ENCODE measurements at regions of chr16 and their contacts with region 1.

Region 1: DNA sequence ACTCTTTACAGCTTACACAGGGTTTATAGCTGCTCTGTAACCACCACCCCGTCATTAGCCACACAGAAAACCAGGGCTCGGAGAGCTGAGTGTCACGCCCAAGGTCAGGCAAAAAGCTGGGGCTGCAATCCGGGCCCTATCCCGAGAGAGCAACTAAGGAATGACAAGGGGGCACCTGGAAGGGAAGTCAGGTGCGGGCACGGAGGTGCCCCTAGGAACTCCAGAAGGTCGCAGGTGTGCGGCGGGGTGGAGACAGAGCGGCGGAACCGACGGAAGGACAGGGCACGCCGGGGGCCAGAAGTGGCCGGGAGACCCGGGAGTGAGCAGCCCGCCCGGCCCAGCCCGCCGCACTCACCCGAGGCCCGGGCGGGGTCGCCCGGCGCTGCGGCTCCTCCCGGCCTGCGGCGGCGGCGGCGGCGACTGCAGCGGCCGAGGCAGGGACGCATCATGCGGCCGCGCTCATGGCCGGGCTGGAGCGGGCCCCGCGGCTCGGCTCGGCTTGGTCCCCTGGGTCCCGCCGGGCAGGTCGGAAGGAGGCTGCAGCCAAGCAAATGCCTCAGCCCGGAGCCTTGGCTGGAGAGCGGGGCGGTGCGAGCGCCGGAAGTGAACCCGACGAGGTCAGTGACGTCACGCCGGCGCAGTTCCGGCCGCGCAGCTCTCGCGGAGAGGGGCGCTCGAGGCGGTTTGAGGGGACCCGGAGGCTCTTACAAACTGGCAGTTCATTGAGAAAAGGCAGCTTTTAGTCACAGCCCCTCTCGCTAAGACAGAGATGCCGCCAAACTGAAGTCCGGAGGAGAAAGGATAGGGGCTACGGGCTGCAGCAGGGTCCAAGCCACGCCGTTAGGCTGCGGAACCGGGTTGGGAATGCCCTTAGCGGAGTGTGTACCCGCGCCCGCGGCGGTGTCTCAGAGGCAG is at the start of gene ZDHHC7:
- DNase-seq: peak; percentile 78
- H3K4me3 Mint-ChIP-seq: peak within 1 kb of the TSS; percentile 97
- H3K27ac Mint-ChIP-seq: peak within 1 kb of the TSS; percentile 98
- H3K4me1 Mint-ChIP-seq: peaks cover 17% of the 10 kb centered on the region
- H3K27me3 Mint-ChIP-seq: no peaks in the 10 kb centered on the region
- total RNA-seq, gene ZDHHC7: 29.1 and 30.0 TPM in 2 replicates

Region 2: DNA sequence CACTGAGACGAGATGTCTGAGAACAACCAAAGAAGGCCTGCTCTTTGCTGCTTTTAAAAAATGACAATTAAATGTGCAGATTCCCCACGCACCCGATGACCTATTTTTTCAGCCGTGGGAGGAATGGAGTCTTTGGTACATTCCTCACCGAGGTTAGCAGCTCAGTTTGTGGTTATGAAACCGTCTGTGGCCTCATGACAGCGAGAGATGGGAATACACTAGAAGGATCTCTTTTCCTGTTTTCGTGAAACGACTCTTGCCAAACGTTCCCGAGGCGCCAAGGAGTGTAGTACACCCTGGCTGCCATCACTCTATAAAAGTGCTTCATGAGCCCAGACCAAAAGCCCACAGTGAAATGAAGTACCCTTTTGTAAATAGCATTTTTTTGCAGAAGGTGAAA is 103.6 kb before region 1 on chr16:
- intact Hi-C with region 1: no loop called
- DNase-seq: no peak
- H3K4me3 Mint-ChIP-seq: no peak overlapping the region
- H3K27ac Mint-ChIP-seq: no peak overlapping the region
- H3K4me1 Mint-ChIP-seq: no peaks in the 10 kb centered on the region
- H3K27me3 Mint-ChIP-seq: peaks cover 7% of the 10 kb centered on the region

Region 3: GRCh38 chr16:85027349-85027957 is 16.3 kb after region 1 on chr16 and contains the start of gene KIAA0513:
- intact Hi-C with region 1: loop called (anchors 1 kb)
- DNase-seq: peak; percentile 94
- H3K4me3 Mint-ChIP-seq: peak within 1 kb of the TSS; percentile 88
- H3K27ac Mint-ChIP-seq: peak within 1 kb of the TSS; percentile 96
- H3K4me1 Mint-ChIP-seq: peaks cover 33% of the 10 kb centered on the region
- H3K27me3 Mint-ChIP-seq: no peaks in the 10 kb centered on the region
- total RNA-seq, gene KIAA0513: 12.8 and 13.6 TPM in 2 replicates

Region 4: GRCh38 chr16:85061566-85061965 is 50.4 kb after region 1 on chr16:
- intact Hi-C with region 1: no loop called
- DNase-seq: no peak
- H3K4me3 Mint-ChIP-seq: no peak overlapping the region
- H3K27ac Mint-ChIP-seq: no peak overlapping the region
- H3K4me1 Mint-ChIP-seq: peaks cover 19% of the 10 kb centered on the region
- H3K27me3 Mint-ChIP-seq: peaks cover 10% of the 10 kb centered on the region

Region 5: DNA sequence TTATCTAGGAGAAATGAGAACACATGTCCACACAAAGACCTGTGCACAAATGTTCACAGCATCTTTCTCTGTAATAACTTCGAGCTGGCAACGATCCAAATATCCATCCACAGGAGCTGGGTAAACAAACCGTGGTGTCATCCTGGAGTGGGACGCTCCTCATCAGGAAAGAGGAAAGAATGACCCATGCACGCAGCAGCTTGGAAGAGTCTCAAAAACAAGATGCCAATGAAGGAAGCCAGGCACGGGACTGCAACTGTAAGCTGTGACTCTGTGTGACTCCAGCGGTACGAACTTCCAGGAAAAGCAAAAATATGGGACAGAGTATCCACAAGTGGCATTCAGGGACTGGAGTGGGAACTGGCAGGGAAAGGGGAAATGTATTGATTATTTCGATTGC is 137.8 kb after region 1 on chr16:
- intact Hi-C with region 1: no loop called
- DNase-seq: no peak
- H3K4me3 Mint-ChIP-seq: no peak overlapping the region
- H3K27ac Mint-ChIP-seq: no peak overlapping the region
- H3K4me1 Mint-ChIP-seq: no peaks in the 10 kb centered on the region
- H3K27me3 Mint-ChIP-seq: no peaks in the 10 kb centered on the region

Measured in activated T-helper 2 cell treated with anti-CD3 and anti-CD28 coated beads, Interferon-gamma antibody, Interleukin-2, Interleukin-4, amounts not matched to agents 10 μg/mL and 5 μg/mL and 100 μg/mL, durations not matched to agents 14 hours and 24 hours and 36 hours (primary cell).